GM10248 (cell line): ENCODE measurements at regions of chr2 and their contacts with region 1.

Region 1: GRCh38 chr2:64192125-64192479 is 47.9 kb upstream of the PELI1 start:
- DNase-seq: peak; percentile 34
- CTCF ChIP-seq: no peak

Region 2: DNA sequence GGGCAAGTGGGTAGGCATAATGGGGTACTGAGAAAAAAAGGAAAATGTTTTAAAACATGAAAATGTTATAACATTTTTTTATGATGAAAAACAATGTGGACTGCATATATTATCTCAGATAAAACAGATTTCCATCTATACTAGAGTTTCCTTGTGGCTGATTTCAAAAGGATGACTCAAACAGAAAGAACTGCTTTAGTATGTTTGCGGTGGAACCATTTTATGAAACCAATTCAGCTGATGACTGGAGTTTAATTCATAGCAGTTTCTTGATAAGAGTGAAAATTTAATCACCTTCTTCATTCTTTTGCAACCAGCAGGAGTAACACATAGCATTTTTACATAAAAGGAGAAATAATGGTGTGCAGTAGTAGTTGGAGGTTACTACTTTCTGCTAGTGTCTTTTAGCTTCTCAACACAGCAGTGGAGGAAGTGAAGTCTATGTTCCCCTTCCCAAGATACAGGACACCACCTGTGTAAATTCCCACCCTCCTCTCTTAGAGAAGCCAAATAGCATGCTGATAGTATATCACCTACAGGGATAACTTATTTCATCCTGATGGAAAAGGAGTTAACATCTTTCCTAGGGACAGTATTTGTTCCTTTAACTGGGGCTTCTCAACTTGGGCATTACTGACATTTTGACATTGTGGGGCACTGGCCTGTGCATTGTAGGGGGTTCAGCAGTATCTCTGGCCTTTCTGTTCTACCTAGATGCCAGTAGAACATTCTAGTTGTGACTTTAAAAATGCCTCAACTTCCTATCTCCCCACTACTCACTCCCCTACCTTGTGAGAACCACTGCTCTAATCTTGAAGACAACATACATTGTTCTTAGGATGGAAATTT is 77.8 kb before region 1 on chr2:
- CTCF ChIA-PET with region 1: no interaction called
- POLR2A ChIA-PET with region 1: no interaction called
- DNase-seq: no peak
- CTCF ChIP-seq: no peak

Region 3: GRCh38 chr2:64203858-64204632 is 11.9 kb after region 1 on chr2:
- CTCF ChIA-PET with region 1: interaction called, 12 read pairs
- POLR2A ChIA-PET with region 1: no interaction called
- DNase-seq: peak; percentile 71
- CTCF ChIP-seq: no peak

Region 4: DNA sequence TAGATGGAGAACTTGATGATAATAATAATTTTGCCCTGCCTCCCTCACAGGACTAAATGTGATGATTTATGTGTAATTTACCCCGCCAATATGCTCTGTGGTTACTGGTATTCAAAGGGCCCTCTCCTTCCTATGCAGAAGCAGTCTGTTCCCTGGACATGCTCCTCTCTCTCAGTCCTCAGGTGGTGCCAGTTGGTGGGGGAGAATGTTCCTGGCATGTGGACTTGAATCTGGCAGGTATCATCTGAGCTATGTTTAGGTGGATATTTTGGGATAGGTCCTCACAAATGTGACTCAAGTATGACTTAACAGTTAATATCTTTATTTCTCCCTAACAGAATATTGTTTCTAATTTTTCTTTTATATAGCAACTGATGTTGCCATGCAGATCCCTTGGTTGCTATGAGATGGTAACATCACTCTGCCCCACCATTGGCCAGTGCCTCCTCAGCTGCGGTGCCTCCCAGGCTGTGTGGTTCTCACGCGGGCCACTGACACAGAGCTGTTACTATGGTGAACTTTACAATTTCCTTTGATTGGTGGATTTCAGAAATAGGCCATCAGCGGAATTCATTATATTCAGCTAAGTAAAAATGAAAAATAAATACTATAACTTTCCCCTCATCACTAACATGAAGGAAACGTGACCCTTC is 58.8 kb after region 1 on chr2:
- CTCF ChIA-PET with region 1: no interaction called
- POLR2A ChIA-PET with region 1: no interaction called
- DNase-seq: no peak
- CTCF ChIP-seq: no peak

Region 5: GRCh38 chr2:64318476-64318748 is 126.3 kb after region 1 on chr2:
- CTCF ChIA-PET with region 1: no interaction called
- POLR2A ChIA-PET with region 1: no interaction called
- DNase-seq: no peak
- CTCF ChIP-seq: no peak

Region 6: DNA sequence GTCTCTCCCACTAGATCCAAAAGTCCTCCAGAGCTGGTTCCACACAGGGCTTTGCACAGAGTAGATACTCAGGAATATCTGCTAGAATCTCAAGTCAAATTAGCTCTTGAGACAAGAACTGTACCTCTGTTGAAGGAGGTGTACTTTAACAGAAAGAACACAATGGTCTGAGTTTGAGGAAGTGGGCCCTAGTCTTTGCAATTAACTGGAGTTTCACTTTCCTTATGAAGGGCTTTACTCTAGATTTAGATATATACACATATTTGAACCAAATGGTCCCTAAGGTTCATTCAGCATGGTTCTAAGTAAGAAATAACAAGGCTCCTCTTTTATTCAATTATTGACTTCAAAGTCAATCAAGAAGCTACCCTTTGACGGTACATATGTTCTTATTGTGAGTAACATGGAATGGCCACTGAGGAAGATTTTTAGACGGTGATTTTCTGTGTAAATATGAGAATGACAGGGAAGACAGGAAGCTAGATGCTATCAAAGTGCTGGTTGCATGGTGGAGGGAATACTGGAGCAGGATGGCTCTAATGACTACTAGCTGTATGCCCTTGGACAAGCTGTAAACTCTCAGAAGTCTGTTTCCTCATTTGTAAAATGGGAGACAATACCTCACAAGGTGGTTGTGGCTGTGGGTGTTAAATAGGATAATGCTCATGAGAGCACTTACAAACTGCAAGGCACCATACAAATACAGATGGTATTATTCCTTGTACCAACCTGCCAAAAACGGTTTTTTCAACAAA is 535.1 kb after region 1 on chr2:
- CTCF ChIA-PET with region 1: no interaction called
- POLR2A ChIA-PET with region 1: no interaction called
- DNase-seq: peak; percentile 70
- CTCF ChIP-seq: no peak